ENCODE measurements at regions of chr1 and their contacts with region 1.

Region 1: DNA sequence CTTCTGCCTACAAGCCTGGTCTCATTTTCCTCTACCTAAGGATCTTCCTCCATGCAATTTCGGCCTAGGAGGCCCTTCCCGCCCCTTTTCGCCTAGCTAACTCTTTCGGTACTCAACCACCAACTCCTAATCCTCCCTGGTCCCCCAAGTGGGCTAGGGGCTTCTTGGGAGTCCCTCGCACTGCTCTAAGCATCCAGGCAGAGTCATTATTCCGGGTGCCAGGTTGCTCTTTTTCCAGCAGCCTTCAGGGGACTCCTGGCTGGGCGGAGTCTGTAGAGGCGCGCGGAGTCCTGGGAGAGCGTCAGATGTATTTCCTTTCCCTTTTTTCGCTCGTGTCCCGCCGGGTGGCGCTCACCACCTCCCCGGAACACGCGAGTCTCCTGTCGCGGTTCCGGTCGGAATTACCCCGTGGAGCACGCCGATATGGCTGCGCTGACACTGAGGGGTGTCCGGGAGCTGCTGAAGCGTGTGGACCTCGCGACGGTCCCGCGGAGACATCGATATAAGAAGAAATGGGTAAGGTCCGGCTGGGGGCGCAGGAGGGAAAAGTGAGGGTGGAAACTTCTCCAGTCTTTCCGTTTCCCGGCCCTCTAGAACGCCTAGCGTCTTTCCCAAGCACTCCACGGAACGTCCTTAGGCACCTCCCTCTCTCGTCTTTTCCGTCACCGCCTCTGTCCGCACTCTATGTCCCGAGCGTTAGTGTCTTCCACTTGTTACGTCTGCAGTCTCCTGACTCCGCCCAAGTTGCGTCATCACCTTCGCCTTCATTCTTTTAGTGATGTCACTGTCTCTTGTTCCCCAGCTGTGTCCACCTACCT is at the start of gene NSUN4:
- DNase-seq: peak; percentile 90
- H3K4me3 Mint-ChIP-seq: peak within 1 kb of the TSS; percentile 85
- H3K27ac Mint-ChIP-seq: peak within 1 kb of the TSS; percentile 94
- H3K4me1 Mint-ChIP-seq: peaks cover 39% of the 10 kb centered on the region
- H3K27me3 Mint-ChIP-seq: no peaks in the 10 kb centered on the region
- CTCF ChIP-seq: peak; percentile 74
- total RNA-seq, gene NSUN4: 38.7 and 42.5 TPM in 2 replicates

Region 2: GRCh38 chr1:46036894-46037839 is 303.4 kb before region 1 on chr1:
- CTCF ChIA-PET with region 1: no interaction called
- intact Hi-C with region 1: loop called (anchors 5 kb)
- DNase-seq: peak; percentile 90
- H3K4me3 Mint-ChIP-seq: no peak overlapping the region
- H3K27ac Mint-ChIP-seq: no peak overlapping the region
- H3K4me1 Mint-ChIP-seq: no peaks in the 10 kb centered on the region
- H3K27me3 Mint-ChIP-seq: no peaks in the 10 kb centered on the region
- CTCF ChIP-seq: peak; percentile 95

Region 3: GRCh38 chr1:46303038-46303871 is 37.4 kb before region 1 on chr1 and contains the starts of genes LRRC41 and UQCRH:
- CTCF ChIA-PET with region 1: interaction called, 13 read pairs
- intact Hi-C with region 1: loop called (anchors 5 kb)
- DNase-seq: peak; percentile 93
- H3K4me3 Mint-ChIP-seq: peak within 1 kb of the TSS; percentile 99
- H3K27ac Mint-ChIP-seq: peak within 1 kb of the TSS; percentile 97
- H3K4me1 Mint-ChIP-seq: peaks cover 31% of the 10 kb centered on the region
- H3K27me3 Mint-ChIP-seq: no peaks in the 10 kb centered on the region
- CTCF ChIP-seq: no peak
- total RNA-seq, gene LRRC41: 47.5 and 48.8 TPM in 2 replicates
- total RNA-seq, gene UQCRH: 410 and 460 TPM in 2 replicates

Region 4: DNA sequence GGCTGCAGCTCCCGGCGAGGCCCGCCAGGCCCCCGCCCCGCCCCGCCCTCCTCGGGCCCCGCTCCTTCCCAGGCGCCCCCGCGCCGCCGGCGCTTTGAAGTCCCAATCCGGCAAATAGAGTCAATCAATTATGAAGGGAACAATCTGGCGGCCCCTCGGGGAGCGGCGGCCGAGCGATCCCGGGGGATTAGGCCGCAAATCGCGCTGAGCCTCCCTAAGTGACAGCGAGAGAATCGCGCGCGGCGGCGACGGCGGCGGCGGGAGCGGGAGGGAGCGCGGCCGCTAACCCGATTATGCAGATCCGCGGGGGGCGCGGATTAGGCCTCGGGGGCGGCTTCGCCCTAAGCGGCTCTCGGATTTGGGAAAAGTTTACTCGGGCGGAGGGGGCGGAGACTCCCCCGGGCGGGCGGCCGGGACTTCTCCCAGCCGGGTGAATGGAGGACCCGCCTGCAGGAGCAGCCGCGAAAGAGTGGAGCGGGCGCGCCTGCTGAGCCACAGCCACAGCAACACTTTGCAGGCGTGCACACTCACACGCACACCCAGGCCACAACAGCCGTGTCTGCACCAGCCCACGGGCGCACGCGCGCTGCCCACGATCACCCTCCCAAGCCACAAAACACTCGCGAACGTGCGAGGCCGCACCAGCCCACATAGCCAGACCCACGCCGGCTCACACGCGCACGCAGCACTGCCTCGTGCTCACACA is 126.0 kb after region 1 on chr1:
- CTCF ChIA-PET with region 1: no interaction called
- intact Hi-C with region 1: no loop called
- DNase-seq: peak; percentile 10
- H3K4me3 Mint-ChIP-seq: peak overlapping the region; percentile 53
- H3K27ac Mint-ChIP-seq: no peak overlapping the region
- H3K4me1 Mint-ChIP-seq: no peaks in the 10 kb centered on the region
- H3K27me3 Mint-ChIP-seq: peaks cover 86% of the 10 kb centered on the region
- CTCF ChIP-seq: no peak

Measured in Calu3 (cell line).